Left cardiac atrium (tissue), 4 donors: ENCODE measurements at regions of chr2 and their contacts with region 1.

Region 1: DNA sequence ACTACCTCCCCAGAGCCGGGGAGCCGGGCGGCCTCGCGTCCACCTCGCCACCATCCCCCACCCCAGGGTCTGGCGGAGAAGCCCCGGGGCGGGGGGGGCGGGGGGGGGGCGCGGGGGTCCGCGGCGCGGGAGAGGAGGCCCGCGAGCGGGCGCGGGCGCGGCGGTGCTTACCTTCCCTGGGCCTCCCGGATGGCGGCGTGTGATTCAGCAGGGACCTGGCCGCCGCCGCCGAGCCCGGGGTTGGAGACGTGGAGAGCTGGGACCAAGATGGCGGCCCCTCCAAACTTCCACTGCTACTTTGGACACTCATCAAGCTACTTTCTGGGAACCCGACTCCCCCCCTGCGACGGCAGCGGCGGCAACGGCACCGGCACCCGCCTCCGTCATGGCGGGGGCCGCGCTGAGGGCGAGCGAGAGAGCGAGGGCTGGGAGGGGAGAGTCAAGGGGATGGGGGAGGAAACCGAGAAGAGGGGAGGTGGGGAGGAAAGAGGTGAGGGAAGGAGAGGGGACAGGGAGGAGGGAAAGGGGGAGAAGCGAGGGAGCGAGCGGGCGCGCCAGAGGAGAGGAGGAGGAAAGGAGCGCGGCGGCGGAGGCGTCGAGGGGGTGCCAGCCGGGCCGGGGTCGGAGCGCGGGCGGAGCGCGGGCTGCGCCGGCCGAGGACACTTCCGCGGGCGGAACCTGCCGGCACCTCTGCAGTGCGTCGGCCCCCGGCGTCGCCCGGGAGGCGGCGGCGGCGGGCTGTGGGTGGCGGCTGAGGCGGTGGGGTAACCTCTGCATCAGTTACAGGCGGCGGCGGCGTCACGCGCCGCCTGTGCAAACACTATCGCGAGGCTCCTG is at the start of gene TLK1:
- DNase-seq: peak; percentile 77
- ATAC-seq: peak; percentile 77 to 86
- total RNA-seq, gene TLK1: 31.5 to 31.8 TPM

Region 2: DNA sequence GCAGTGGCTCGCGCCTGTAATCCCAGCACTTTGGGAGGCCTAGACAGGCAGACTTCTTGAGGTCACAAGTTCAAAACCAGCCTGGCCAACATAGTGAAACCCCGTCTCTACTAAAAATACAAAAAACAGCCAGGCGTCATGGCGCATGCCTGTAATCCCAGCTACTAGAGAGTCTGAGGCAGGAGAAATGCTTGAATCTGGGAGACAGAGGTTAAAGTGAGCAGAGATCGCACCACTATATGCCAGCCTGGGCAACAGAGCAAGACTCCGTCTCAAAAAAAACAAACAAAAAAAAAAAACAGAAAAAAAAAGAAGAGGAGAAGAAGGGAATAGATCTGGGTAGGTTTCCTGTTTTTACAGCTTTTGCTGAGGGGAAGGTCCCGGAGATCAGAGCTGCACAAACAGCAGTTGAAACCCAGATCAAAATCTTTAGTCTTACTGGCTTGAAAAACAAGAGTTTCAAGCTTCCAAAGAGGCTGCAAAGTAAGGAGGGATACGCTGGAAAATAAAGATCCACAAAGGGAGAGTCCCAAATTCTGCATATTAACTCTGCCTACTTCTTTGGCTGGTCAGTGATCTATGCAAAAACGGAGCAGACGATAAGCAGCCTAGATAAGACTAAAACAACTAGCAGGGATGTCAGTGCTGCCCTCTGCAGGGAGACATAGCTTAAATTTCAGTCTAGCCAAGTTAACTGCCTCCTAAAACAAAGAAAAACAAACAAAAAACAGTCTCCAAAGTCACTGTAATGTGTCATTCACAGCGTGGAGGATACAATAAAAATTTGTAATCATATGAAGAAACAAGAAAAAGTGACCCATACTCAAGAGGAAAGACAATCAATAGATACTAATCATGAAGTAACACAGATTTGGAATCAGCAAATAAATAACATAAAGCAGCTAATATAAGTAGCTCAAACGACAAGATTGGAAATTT is 73.7 kb before region 1 on chr2:
- intact Hi-C with region 1: loop called in 1 of 2 experiments (anchors 10 kb)
- DNase-seq: peak; percentile 27
- ATAC-seq: peak in 1 of 2 donors; percentile 75

Region 3: DNA sequence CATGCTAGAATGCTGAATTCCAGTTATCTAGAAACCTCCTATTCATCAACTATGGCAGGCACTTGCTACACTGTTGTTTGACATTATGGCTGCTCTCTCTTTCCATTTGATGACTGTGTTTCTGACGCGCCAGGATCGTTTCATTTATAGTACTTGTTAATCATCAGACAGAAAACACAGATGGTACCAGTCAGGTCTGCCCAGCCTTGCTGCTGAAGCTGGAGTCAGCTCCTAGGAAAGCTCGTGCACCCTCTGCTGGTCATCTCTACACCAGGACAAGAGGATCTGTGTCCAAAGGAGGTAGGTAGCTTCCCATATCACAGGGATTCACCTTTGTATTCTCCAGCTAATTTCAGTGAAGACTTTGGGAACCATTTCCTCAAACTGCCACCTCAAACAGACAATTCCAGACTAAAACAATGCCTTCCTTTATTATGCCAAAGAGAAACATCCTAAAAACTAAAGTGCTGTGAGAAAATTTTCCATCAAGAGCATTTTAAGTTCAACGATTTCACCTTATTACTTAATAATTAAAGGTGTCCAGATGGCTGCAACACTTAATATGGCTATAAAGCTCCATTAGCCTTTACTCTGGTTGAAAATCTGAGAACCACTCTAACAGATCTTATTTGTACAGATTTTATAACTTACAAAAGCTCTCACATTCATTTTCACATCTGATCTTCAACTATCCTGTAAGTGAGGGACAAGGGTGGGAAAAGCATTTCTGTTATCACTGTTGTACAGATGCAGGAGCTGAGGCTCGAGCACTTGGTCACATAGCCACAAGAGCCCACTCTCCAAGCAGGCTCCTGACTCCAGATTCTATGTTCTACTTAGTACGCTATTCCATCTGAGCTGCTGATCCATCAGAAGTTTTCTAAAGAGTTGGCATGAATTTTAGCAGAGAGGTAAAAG is 255.9 kb after region 1 on chr2:
- intact Hi-C with region 1: loop called in 1 of 2 experiments (anchors 10 kb)
- DNase-seq: peak; percentile 90
- ATAC-seq: peak; percentile 98 to 99